A549 (cell line): ENCODE measurements at regions of chr7 and their contacts with region 1.

Region 1: GRCh38 chr7:130047821-130048220 is 3.4 kb downstream of the ZC3HC1 start:
- DNase-seq: no peak
- ATAC-seq: no peak
- H3K4me3 ChIP-seq: no peak overlapping the region
- H3K27ac ChIP-seq: no peak overlapping the region
- H3K4me1 ChIP-seq: peaks cover 11% of the 10 kb centered on the region
- CTCF ChIP-seq: no peak
- EP300 ChIP-seq: no peak
- POLR2A ChIP-seq: no peak
- RAD21 ChIP-seq: no peak

Region 2: DNA sequence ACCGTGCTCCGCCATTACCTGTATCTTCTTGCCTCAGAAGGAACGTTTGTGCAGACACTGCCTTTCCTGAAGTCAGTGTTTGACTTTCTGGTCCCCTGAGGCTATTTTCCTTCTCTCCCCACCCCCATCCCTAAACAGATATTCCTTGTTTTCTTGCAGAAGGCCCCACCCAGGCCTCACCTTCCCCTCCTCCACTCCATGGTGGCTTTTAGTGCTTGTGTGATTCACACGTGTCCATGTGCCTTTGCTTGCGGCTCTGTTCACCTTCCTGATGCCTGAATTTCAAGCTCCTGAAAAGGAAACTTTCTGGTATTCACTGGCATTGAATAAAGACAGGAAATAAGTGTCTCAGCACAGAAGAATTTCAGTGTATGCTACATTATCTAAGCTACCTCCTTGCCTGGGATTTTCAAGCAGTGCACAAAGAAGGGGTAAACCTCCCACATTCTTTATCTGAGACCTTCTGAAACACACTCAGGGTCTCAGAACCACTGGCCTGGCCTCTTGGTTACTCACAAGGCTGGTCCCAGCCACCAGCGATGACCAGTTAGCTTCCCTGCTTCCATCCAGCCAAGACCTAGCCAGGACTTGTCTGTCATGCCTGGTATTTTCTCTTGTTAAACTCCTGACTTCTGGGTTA is 77.9 kb before region 1 on chr7:
- CTCF ChIA-PET with region 1: no interaction called
- POLR2A ChIA-PET with region 1: no interaction called
- DNase-seq: peak in 1 of 2 experiments; percentile 88
- ATAC-seq: peak; percentile 81 to 90
- H3K4me3 ChIP-seq: no peak overlapping the region
- H3K27ac ChIP-seq: peak overlapping the region; percentile 77 to 84
- H3K4me1 ChIP-seq: peaks cover 32% of the 10 kb centered on the region
- CTCF ChIP-seq: no peak
- EP300 ChIP-seq: no peak
- POLR2A ChIP-seq: no peak
- RAD21 ChIP-seq: no peak

Region 3: GRCh38 chr7:129998446-129998845 is 49.4 kb before region 1 on chr7:
- CTCF ChIA-PET with region 1: no interaction called
- POLR2A ChIA-PET with region 1: no interaction called
- DNase-seq: no peak
- ATAC-seq: no peak
- H3K4me3 ChIP-seq: no peak overlapping the region
- H3K27ac ChIP-seq: no peak overlapping the region
- H3K4me1 ChIP-seq: no peaks in the 10 kb centered on the region
- CTCF ChIP-seq: no peak
- EP300 ChIP-seq: no peak
- POLR2A ChIP-seq: no peak
- RAD21 ChIP-seq: no peak

Region 4: GRCh38 chr7:130021105-130021834 is 26.6 kb before region 1 on chr7:
- CTCF ChIA-PET with region 1: no interaction called
- POLR2A ChIA-PET with region 1: no interaction called
- DNase-seq: no peak
- ATAC-seq: no peak
- H3K4me3 ChIP-seq: no peak overlapping the region
- H3K27ac ChIP-seq: no peak overlapping the region
- H3K4me1 ChIP-seq: peaks cover 13% of the 10 kb centered on the region
- CTCF ChIP-seq: no peak
- EP300 ChIP-seq: no peak
- POLR2A ChIP-seq: no peak
- RAD21 ChIP-seq: no peak

Region 5: GRCh38 chr7:130063036-130063435 is 15.2 kb after region 1 on chr7:
- CTCF ChIA-PET with region 1: interaction called, 10 read pairs
- POLR2A ChIA-PET with region 1: no interaction called
- DNase-seq: peak in 1 of 2 experiments; percentile 54
- ATAC-seq: peak in 1 of 2 experiments; percentile 81; a peak in 4 of 6 replicates
- H3K4me3 ChIP-seq: no peak overlapping the region
- H3K27ac ChIP-seq: no peak overlapping the region
- H3K4me1 ChIP-seq: no peaks in the 10 kb centered on the region
- CTCF ChIP-seq: peak; percentile 48; the same call in 2 of the 3 replicates
- EP300 ChIP-seq: no peak
- POLR2A ChIP-seq: no peak
- RAD21 ChIP-seq: peak in 1 of 2 experiments; percentile 45; a peak in 3 of 5 replicates